Mucosa of descending colon (tissue), 3 donors: ENCODE measurements at regions of chr7 and their contacts with region 1.

Region 1: DNA sequence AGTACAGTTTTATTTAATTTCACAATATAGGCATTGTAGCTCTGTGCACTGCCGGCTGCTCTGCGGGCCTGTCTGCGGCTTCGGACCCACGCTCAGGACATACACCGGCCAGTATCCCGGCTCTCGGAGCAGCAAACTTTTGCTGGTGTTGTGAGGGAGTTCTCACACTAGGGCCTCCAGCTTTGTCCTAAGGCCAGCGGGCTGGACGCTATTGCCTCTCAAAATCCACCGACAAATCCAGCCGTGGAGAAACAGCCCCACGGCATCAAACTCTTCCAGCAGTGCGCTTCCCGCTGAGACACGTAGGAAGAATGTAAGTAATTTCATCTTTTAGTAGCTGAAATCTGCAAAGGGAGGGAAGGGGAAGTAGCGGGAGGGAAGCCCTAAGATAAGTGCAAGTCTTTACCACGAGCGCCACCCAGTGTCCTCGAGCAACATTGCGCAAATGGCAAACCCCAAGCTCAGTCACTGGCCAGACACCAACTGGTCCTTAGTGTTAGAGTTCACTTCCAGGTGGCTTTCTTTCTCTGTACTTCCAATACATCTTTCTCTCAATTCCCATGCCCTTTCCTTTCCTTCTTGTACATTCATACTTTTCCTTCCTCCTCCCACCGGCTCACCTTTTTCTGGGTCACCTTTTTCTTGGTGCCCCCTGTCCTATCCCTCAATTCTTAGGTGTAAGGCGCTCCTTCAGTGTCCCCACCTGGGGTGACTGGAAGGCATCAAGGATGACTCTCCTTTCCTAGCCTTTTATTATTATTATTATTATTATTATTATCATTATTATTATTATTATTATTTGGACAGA is 3.0 kb upstream of the DLX5 start:
- DNase-seq: peak in 2 of 3 donors; percentile 76
- ATAC-seq: peak; percentile 87
- H3K4me3 ChIP-seq: no peak overlapping the region
- H3K4me1 ChIP-seq: peaks cover 3% of the 10 kb centered on the region
- CTCF ChIP-seq: peak; percentile 58

Region 2: GRCh38 chr7:95916573-95917297 is 1110.9 kb before region 1 on chr7:
- intact Hi-C with region 1: loop called (anchors 5 to 10 kb)
- DNase-seq: peak; percentile 57 to 92 (median 75)
- ATAC-seq: peak; percentile 67
- H3K4me3 ChIP-seq: no peak overlapping the region
- H3K4me1 ChIP-seq: no peaks in the 10 kb centered on the region
- CTCF ChIP-seq: peak; percentile 75

Region 3: GRCh38 chr7:96075510-96076349 is 951.9 kb before region 1 on chr7:
- intact Hi-C with region 1: loop called (anchors 5 to 10 kb)
- DNase-seq: peak; percentile 40 to 51 (median 46)
- ATAC-seq: peak; percentile 76
- H3K4me3 ChIP-seq: no peak overlapping the region
- H3K4me1 ChIP-seq: peaks cover 4% of the 10 kb centered on the region
- CTCF ChIP-seq: peak; percentile 50

Region 4: GRCh38 chr7:96996105-96996957 is 31.3 kb before region 1 on chr7:
- intact Hi-C with region 1: no loop called
- DNase-seq: no peak
- ATAC-seq: no peak
- H3K4me3 ChIP-seq: no peak overlapping the region
- H3K4me1 ChIP-seq: no peaks in the 10 kb centered on the region
- CTCF ChIP-seq: no peak